ENCODE measurements at regions of chr15 and their contacts with region 1.

Region 1: DNA sequence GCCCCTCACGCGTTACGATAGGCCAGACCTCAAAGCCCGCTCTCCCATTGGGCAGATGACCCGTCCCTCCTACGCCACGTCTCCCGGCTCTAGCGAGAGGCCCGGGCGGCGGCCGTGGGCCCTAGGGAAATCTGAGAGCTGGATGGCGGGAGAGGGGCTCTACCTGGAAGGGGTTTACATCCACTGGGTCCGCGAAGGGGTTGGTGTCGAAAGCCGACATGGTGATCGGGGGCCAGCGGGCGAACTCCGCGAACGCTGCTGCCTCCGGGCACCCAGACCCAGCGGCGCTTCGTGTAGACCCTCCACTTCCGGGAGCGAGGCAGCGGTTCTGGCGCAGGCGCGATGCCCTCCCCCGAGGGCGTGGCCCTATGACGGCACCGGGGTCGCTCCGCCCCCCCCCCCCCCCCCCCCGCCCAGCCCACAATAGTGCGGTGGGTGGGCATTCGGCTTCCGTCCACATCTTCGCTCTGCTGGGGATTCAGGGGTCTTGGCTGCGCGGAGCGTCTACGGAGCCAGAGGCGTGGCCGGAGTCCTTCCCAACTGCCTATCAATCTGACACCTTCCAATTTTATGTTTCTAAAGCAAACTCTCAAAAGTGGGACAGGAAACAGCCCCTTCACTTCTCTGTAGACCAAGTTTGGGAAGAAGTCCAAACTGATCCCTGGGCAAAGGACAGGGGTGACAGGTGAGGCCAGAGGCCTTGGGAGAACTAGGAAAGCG is at the start of gene SCAMP2:
- DNase-seq: peak; percentile 93
- H3K4me3 Mint-ChIP-seq: peak within 1 kb of the TSS; percentile 96
- H3K27ac Mint-ChIP-seq: peak within 1 kb of the TSS; percentile 90
- H3K4me1 Mint-ChIP-seq: peaks cover 45% of the 10 kb centered on the region
- H3K27me3 Mint-ChIP-seq: no peaks in the 10 kb centered on the region
- total RNA-seq, gene SCAMP2: 77.6 to 79.5 TPM

Region 2: DNA sequence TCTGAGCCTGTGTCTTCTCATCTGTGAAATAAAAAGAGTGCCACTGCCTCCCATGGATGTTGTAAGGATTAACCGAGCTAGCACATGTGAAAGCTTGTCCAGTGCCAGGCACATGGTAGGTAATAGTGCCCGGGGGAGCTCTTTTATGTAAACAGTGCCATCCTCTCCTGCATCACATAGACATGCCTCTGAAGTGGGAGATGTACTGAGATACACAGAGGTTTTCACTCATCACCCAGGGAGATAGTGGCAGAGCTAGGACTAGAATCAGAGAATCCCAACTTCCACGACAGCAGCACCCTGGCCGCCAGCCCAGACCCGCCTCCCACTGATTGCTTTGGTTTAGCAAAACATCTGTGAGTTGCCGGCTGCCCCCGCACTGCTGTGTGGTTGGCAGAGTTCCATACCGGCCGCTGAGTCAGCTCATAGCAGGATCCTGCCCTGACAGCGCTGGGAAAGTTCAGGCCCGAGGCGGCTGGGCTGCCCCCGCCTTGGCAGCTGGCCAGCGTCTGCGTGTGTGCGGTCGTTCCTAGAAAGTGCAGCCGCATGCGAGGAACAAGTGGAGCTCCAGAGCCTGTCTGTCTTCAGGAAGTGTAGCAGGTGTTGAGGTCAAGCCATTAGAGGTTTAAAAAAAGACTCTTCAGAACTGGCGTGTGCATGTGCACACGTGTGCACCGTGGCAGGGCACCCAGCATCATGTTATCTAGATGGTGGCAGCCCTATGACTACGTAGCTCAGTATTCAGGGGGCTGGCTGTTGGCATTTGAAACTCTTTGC is 327.1 kb before region 1 on chr15:
- CTCF ChIA-PET with region 1: no interaction called
- POLR2A ChIA-PET with region 1: interaction called, 3 read pairs
- intact Hi-C with region 1: loop called (anchors 5 kb)
- DNase-seq: peak; percentile 99
- H3K4me3 Mint-ChIP-seq: peak overlapping the region; percentile 49
- H3K27ac Mint-ChIP-seq: peak overlapping the region; percentile 62
- H3K4me1 Mint-ChIP-seq: peaks cover 74% of the 10 kb centered on the region
- H3K27me3 Mint-ChIP-seq: no peaks in the 10 kb centered on the region

Region 3: GRCh38 chr15:74793135-74794028 is 79.8 kb before region 1 on chr15:
- CTCF ChIA-PET with region 1: interaction called, 13 read pairs
- POLR2A ChIA-PET with region 1: interaction called, 9 read pairs
- intact Hi-C with region 1: no loop called
- DNase-seq: peak; percentile 81
- H3K4me3 Mint-ChIP-seq: peak overlapping the region; percentile 29
- H3K27ac Mint-ChIP-seq: peak overlapping the region; percentile 99
- H3K4me1 Mint-ChIP-seq: peaks cover 88% of the 10 kb centered on the region
- H3K27me3 Mint-ChIP-seq: no peaks in the 10 kb centered on the region

Region 4: DNA sequence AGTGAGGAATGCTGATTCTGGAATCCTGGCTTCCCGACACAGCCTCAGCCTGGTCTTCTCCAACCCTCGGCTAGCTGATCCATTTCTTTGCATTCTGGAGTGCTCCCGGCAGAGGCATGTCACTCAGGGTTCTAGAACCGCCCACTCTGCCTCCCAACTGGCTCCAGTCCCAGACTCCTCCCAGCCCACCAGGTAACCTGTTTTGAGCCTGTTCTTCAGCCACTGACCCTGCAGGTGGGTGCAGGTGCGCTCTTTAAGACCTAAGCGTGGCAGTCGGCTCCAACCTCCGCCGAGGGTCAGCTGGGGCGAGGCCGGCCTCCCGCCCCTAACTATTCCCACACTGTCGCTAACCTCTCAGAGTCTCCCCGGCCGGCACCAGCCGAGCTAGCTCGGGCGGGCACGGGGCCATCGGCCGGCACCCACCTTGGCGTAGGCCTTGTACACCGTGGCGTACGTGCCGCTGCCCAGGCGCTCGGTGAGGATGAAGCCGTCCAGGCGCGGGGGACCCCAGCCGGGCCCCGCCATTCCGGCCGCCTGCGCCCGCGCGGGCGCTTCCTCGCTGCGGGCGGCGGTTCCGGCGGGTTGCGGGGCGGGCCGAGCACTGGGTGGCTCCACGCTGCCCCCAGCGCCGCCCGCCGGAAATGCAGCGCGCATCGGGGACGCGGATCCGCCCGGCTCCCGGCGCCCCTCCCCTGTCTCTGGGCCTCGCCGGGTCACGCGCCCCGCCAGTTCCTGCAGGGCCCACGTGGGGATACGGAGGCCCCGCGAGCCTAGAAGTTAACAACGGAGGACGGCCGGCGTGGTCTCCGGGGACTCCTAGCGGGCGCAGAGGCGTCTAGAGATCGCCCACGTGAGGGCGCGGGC is 30.4 kb before region 1 on chr15 and contains the start of gene ULK3:
- CTCF ChIA-PET with region 1: interaction called, 17 read pairs
- POLR2A ChIA-PET with region 1: interaction called, 9 read pairs
- intact Hi-C with region 1: loop called (anchors 1 kb)
- DNase-seq: peak; percentile 95
- H3K4me3 Mint-ChIP-seq: peak within 1 kb of the TSS; percentile 92
- H3K27ac Mint-ChIP-seq: peak within 1 kb of the TSS; percentile 93
- H3K4me1 Mint-ChIP-seq: peaks cover 44% of the 10 kb centered on the region
- H3K27me3 Mint-ChIP-seq: no peaks in the 10 kb centered on the region
- total RNA-seq, gene ULK3: 51.4 to 57.6 TPM

Region 5: GRCh38 chr15:74889883-74890664 is 16.9 kb after region 1 on chr15 and contains the start of gene MPI:
- CTCF ChIA-PET with region 1: interaction called, 5 read pairs
- POLR2A ChIA-PET with region 1: interaction called, 8 read pairs
- intact Hi-C with region 1: loop called (anchors 2 kb)
- DNase-seq: peak; percentile 93
- H3K4me3 Mint-ChIP-seq: peak within 1 kb of the TSS; percentile 90
- H3K27ac Mint-ChIP-seq: peak within 1 kb of the TSS; percentile 76
- H3K4me1 Mint-ChIP-seq: peaks cover 44% of the 10 kb centered on the region
- H3K27me3 Mint-ChIP-seq: no peaks in the 10 kb centered on the region
- total RNA-seq, gene MPI: 56.4 to 60.0 TPM

Measured in activated CD4-positive, alpha-beta memory T cell treated with anti-CD3 and anti-CD28 coated beads for 36 hours (primary cell).